GM12878 (cell line): ENCODE measurements at regions of chr18 and their contacts with region 1.

Region 1: DNA sequence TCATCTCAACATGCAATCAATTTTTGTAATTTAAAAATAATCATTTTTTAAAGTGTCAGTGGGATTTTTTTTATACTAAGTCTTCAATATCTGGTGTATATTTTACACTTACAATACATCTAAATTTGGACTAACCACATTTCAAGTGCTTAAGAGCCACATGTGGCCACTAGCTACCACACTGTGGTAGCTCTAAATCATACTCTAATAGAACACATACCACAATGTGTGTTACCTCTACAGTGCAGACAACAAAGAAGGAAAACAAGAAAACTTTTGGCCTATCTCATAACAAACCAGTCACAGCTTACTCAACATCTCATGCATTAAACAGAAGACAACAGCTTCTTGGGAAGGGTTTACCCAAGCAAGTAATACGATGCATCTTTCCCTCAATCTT is 24.5 kb downstream of the PIAS2 start:
- DNase-seq: peak; percentile 60
- ATAC-seq: peak; percentile 84
- H3K4me3 ChIP-seq: no peak overlapping the region
- H3K27ac ChIP-seq: no peak overlapping the region
- H3K4me1 ChIP-seq: peaks cover 32% of the 10 kb centered on the region
- H3K27me3 ChIP-seq: no peaks in the 10 kb centered on the region
- CTCF ChIP-seq: no peak
- EP300 ChIP-seq: peak; percentile 68 to 79; a peak in 3 of 4 replicates
- POLR2A ChIP-seq: no peak
- RAD21 ChIP-seq: no peak

Region 2: GRCh38 chr18:46917108-46917802 is 24.4 kb after region 1 on chr18 and contains the starts of genes KATNAL2 and PIAS2:
- CTCF ChIA-PET with region 1: interaction called, 8 read pairs
- POLR2A ChIA-PET with region 1: interaction called, 7 read pairs
- RAD21 ChIA-PET with region 1: interaction called, 13 read pairs
- SMC1A ChIA-PET with region 1: interaction called, 7 read pairs
- in situ Hi-C with region 1: no loop called
- intact Hi-C with region 1: no loop called
- DNase-seq: no peak
- ATAC-seq: peak; percentile 90
- H3K4me3 ChIP-seq: peak within 1 kb of the TSS; percentile 94
- H3K27ac ChIP-seq: peak within 1 kb of the TSS; percentile 82
- H3K4me1 ChIP-seq: no peaks in the 10 kb centered on the region; the same call in 1 of the 2 replicates
- H3K27me3 ChIP-seq: no peaks in the 10 kb centered on the region
- CTCF ChIP-seq: peak in 1 of 3 experiments; percentile 42; a peak in 2 of 6 replicates
- EP300 ChIP-seq: no peak
- POLR2A ChIP-seq: peak; percentile 97
- RAD21 ChIP-seq: peak; percentile 53; the same call in 1 of the 2 replicates
- polyA plus RNA-seq, gene KATNAL2: 0.53 to 0.95 TPM
- polyA plus RNA-seq, gene PIAS2: 4.0 to 7.2 TPM